ENCODE measurements at regions of chr2 and their contacts with region 1.

Region 1: GRCh38 chr2:177724398-177725287 is 332.1 kb downstream of the AGPS start:
- DNase-seq: peak in 1 of 2 experiments; percentile 61
- H3K4me3 ChIP-seq: no peak overlapping the region
- H3K27ac ChIP-seq: no peak overlapping the region
- H3K4me1 ChIP-seq: no peaks in the 10 kb centered on the region
- H3K27me3 ChIP-seq: no peaks in the 10 kb centered on the region
- CTCF ChIP-seq: peak; percentile 99

Region 2: DNA sequence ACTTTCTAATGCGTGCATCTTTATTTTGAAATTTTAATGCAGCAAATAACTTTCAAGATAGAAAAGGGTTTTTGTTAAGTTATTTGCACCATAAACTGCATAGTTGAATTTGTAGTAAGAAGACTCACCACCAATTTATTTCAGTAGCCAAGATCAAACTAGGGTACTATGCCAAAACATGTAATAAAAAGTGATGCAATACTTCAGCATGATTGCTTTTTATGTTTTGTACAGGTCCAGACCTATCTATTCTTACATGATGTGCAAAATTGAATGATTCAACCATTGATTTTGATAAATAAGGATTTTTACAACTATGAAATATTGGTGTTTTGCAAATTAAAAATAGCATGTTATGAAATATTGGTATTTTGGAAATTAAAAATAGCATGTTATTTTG is 305.4 kb before region 1 on chr2:
- CTCF ChIA-PET with region 1: no interaction called
- POLR2A ChIA-PET with region 1: no interaction called
- intact Hi-C with region 1: loop called (anchors 1 kb)
- DNase-seq: no peak
- H3K4me3 ChIP-seq: no peak overlapping the region
- H3K27ac ChIP-seq: peak overlapping the region; percentile 43
- H3K4me1 ChIP-seq: peaks cover 11% of the 10 kb centered on the region
- H3K27me3 ChIP-seq: no peaks in the 10 kb centered on the region
- CTCF ChIP-seq: no peak

Region 3: GRCh38 chr2:177604271-177605065 is 120.2 kb before region 1 on chr2:
- CTCF ChIA-PET with region 1: no interaction called
- POLR2A ChIA-PET with region 1: no interaction called
- intact Hi-C with region 1: loop called (anchors 5 kb)
- DNase-seq: peak in 1 of 2 experiments; percentile 16
- H3K4me3 ChIP-seq: no peak overlapping the region
- H3K27ac ChIP-seq: no peak overlapping the region
- H3K4me1 ChIP-seq: no peaks in the 10 kb centered on the region
- H3K27me3 ChIP-seq: no peaks in the 10 kb centered on the region
- CTCF ChIP-seq: peak; percentile 84